AG04450 (cell line): ENCODE measurements at regions of chr19 and their contacts with region 1.

Region 1: DNA sequence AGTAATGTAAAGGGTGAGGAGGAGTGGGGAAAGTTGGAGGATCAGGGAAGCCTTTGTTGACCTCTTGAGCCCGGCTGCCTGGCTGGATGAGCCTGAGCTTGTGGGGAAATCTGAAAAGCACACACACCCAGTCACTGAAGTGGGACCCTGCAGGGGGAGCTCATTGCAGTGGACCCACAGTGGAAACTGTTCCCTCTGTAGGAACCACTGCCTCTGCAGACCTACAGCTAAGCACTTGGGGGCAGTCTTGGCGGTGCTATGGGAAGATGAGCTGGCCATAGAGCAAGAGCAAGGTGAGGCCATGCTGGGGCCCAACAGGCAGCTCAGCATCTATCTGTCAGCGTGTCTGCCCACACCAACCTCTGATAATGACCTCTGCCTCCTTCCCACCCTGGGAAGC is 294.8 kb downstream of the TSHZ3 start:
- DNase-seq: peak; percentile 56
- H3K4me3 ChIP-seq: no peak overlapping the region
- H3K27ac ChIP-seq: no peak overlapping the region
- H3K27me3 ChIP-seq: no peaks in the 10 kb centered on the region
- CTCF ChIP-seq: peak; percentile 88

Region 2: DNA sequence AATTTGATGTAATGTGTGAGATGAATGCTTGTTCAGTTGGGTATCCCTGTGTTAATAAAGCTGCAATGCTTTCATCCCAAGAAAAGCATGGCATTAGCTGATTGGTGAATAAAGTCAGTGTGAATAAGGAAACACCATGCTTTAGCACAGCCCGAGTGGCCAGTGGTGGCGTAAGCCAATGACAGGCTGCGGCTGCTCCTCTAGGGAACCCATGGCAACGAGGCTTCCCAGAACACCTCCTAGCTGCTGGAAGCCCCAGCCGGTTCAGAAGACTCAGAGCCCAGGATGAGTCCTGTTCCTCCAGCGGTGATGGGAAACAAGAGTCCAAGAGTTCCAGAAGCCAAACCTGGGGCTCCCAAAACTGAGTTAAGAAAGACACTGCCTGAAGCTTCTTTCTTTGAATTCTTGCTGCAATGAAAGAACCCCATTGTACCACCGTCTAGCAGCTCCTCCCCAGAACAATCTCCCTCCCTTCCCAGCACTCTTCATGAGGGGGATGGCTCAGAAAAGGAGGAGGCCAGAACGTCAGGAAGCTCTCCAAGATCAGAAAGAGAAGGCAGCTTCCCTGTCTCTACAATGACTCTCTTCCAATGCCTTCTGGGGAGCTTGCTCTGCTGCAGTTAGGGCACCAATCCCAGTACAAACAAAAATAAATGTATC is 236.6 kb after region 1 on chr19:
- CTCF ChIA-PET with region 1: interaction called, 10 read pairs
- POLR2A ChIA-PET with region 1: no interaction called
- DNase-seq: no peak
- H3K4me3 ChIP-seq: no peak overlapping the region
- H3K27ac ChIP-seq: no peak overlapping the region
- H3K27me3 ChIP-seq: no peaks in the 10 kb centered on the region
- CTCF ChIP-seq: no peak

Region 3: DNA sequence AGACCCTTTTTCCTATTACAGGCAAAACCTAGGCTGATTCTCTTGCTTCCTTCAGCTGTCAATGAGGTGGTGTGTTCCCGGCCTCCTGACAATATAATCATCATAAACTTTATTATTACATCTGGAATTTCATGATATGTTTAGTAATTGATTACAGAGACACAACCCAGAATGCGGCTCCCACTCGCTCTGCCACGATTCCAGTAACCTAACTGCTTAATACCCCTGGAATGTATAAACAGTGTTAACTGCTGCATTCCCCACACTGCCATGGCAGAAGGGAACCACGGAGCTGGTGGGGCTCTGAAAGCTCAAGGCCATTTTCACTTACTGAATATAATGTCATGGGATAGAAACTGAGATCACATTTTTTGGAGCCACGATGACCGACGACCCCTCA is 277.7 kb after region 1 on chr19:
- CTCF ChIA-PET with region 1: interaction called, 13 read pairs
- POLR2A ChIA-PET with region 1: interaction called, 3 read pairs
- DNase-seq: no peak
- H3K4me3 ChIP-seq: no peak overlapping the region
- H3K27ac ChIP-seq: peak overlapping the region; percentile 90
- H3K27me3 ChIP-seq: no peaks in the 10 kb centered on the region
- CTCF ChIP-seq: no peak

Region 4: GRCh38 chr19:31348481-31349159 is 294.2 kb after region 1 on chr19:
- CTCF ChIA-PET with region 1: interaction called, 31 read pairs
- POLR2A ChIA-PET with region 1: no interaction called
- DNase-seq: no peak
- H3K4me3 ChIP-seq: peak overlapping the region; percentile 88
- H3K27ac ChIP-seq: peak overlapping the region; percentile 70
- H3K27me3 ChIP-seq: no peaks in the 10 kb centered on the region
- CTCF ChIP-seq: no peak

Region 5: GRCh38 chr19:31548941-31549340 is 494.5 kb after region 1 on chr19:
- CTCF ChIA-PET with region 1: interaction called, 30 read pairs
- POLR2A ChIA-PET with region 1: no interaction called
- DNase-seq: peak; percentile 11
- H3K4me3 ChIP-seq: no peak overlapping the region
- H3K27ac ChIP-seq: no peak overlapping the region
- H3K27me3 ChIP-seq: peaks cover 2% of the 10 kb centered on the region
- CTCF ChIP-seq: peak; percentile 79